Dendritic cell treated with granulocyte-macrophage colony-stimulating factor and Interleukin-4, amounts not matched to agents 40 ng/mL and 50 ng/mL, for 4 days (primary cell): ENCODE measurements at regions of chr6 and their contacts with region 1.

Region 1: GRCh38 chr6:52352239-52353008 is 9.5 kb upstream of the PAQR8 start:
- H3K4me3 Mint-ChIP-seq: peak overlapping the region; percentile 62
- H3K27ac Mint-ChIP-seq: peak overlapping the region; percentile 69
- H3K4me1 Mint-ChIP-seq: peaks cover 34% of the 10 kb centered on the region
- H3K27me3 Mint-ChIP-seq: no peaks in the 10 kb centered on the region

Region 2: GRCh38 chr6:52304983-52305390 is 47.4 kb before region 1 on chr6:
- intact Hi-C with region 1: loop called (anchors 5 kb)
- H3K4me3 Mint-ChIP-seq: peak overlapping the region; percentile 26
- H3K27ac Mint-ChIP-seq: peak overlapping the region; percentile 94
- H3K4me1 Mint-ChIP-seq: peaks cover 56% of the 10 kb centered on the region
- H3K27me3 Mint-ChIP-seq: no peaks in the 10 kb centered on the region